ENCODE measurements at regions of chr10 and their contacts with region 1.

Region 1: DNA sequence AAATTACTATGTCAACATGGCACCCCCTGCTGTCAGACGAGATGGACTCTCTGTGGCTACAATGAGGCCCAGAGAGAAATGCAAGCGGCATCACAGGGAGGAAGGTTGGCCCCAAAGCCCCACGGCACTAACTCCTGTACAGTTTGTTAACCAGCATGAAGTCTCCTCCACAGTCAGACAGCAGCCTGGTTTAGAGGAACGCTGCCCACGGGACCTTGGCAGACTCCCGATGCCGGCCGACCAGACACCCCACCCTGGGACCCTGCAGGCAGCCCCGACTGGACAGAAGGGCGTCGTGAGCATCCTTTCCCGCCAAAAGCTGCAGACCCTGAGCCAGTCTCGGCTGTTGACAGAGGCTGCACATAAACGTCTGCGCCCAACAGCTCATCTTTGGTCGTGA is 158.8 kb downstream of the DIP2C start:
- DNase-seq: no peak
- H3K4me3 ChIP-seq: no peak overlapping the region
- H3K27ac ChIP-seq: no peak overlapping the region
- H3K4me1 ChIP-seq: peaks cover 24% of the 10 kb centered on the region
- H3K27me3 ChIP-seq: no peaks in the 10 kb centered on the region
- CTCF ChIP-seq: no peak
- EP300 ChIP-seq: no peak
- POLR2A ChIP-seq: no peak

Region 2: GRCh38 chr10:470338-470999 is 60.2 kb before region 1 on chr10:
- intact Hi-C with region 1: no loop called
- DNase-seq: no peak
- H3K4me3 ChIP-seq: no peak overlapping the region
- H3K27ac ChIP-seq: no peak overlapping the region
- H3K4me1 ChIP-seq: no peaks in the 10 kb centered on the region
- H3K27me3 ChIP-seq: no peaks in the 10 kb centered on the region
- CTCF ChIP-seq: no peak
- EP300 ChIP-seq: no peak
- POLR2A ChIP-seq: no peak

Region 3: DNA sequence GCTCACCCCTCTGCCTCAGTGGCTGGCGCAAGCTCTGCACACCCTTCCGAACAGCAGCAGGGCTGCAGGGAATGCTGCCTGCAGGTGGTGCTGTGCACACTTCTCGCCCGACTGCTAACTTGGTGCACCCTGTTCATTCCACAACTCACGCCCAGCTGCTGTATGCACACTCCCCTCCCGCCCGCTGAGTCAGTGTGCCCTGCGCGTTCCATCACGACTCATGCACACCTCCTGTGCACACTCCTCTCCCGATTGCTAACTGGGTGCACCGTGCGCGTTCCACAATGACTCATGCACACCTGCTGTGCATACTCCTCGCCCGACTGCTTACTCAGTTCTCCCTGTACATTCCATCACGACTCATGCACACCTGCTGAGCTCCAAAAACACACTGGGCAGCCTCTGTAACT is 1185.1 kb after region 1 on chr10:
- intact Hi-C with region 1: loop called in 1 of 4 experiments (anchors 5 kb)
- DNase-seq: no peak
- H3K4me3 ChIP-seq: no peak overlapping the region
- H3K27ac ChIP-seq: no peak overlapping the region
- H3K4me1 ChIP-seq: no peaks in the 10 kb centered on the region
- H3K27me3 ChIP-seq: no peaks in the 10 kb centered on the region
- CTCF ChIP-seq: no peak
- EP300 ChIP-seq: no peak
- POLR2A ChIP-seq: no peak

Measured in ovary (tissue), 10 donors.